GM12878 (cell line): ENCODE measurements at regions of chr3 and their contacts with region 1.

Region 1: DNA sequence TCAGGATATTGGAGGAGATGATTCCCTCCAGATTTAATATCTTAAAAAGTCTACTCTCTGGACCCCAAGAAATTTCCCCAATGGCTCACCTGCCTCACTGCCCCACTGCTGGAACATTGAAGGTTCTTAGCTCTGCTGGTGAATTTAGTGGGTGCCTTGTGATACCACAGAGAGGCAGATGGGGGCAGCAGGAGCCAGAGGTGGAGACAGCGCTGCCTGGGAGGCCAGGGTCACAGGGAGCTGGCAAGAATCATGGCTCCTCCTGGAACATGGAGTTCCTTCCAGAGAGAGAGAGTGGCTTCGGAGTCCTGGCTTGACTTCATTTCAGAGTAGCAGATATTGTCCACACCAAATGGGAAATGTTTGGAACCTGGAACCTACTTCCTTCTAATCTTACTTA is 263.5 kb upstream of the CFAP20DC start:
- DNase-seq: no peak
- ATAC-seq: peak; percentile 93
- H3K4me3 ChIP-seq: no peak overlapping the region
- H3K27ac ChIP-seq: no peak overlapping the region
- H3K4me1 ChIP-seq: no peaks in the 10 kb centered on the region
- H3K27me3 ChIP-seq: no peaks in the 10 kb centered on the region
- CTCF ChIP-seq: peak; percentile 63 to 85 (median 76)
- EP300 ChIP-seq: no peak
- POLR2A ChIP-seq: no peak
- RAD21 ChIP-seq: peak; percentile 99

Region 2: GRCh38 chr3:59127071-59127470 is 186.3 kb before region 1 on chr3:
- CTCF ChIA-PET with region 1: no interaction called
- POLR2A ChIA-PET with region 1: no interaction called
- RAD21 ChIA-PET with region 1: no interaction called
- SMC1A ChIA-PET with region 1: no interaction called
- in situ Hi-C with region 1: no loop called
- intact Hi-C with region 1: no loop called
- DNase-seq: no peak
- ATAC-seq: no peak
- H3K4me3 ChIP-seq: no peak overlapping the region
- H3K27ac ChIP-seq: no peak overlapping the region
- H3K4me1 ChIP-seq: no peaks in the 10 kb centered on the region
- H3K27me3 ChIP-seq: 0 out of 4 replicates have a peak, but pooled peaks cover 0 to 2% of the 10 kb centered on the region in 2 experiments
- CTCF ChIP-seq: no peak
- EP300 ChIP-seq: no peak
- POLR2A ChIP-seq: no peak
- RAD21 ChIP-seq: no peak

Region 3: DNA sequence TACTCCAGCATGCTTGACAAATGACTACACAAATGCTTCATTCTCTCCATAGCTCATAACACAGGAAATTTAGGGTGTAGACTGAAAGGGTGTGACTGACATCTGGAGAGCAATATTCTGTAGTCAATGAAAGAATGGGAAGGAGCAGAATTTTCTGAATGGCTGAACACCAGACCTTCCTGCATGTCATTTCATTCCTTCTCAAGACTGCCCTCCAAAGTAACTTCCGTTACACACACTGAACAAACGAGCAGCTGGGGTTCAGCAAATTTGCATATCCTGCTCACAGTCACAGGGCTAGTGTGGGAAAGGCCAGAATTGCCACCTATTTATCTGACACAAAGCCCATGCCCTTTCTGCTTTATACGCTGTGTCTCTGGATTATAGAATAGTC is 61.5 kb after region 1 on chr3:
- CTCF ChIA-PET with region 1: interaction called, 17 read pairs
- POLR2A ChIA-PET with region 1: no interaction called
- RAD21 ChIA-PET with region 1: interaction called, 8 read pairs
- SMC1A ChIA-PET with region 1: interaction called, 14 read pairs
- in situ Hi-C with region 1: no loop called
- intact Hi-C with region 1: no loop called
- DNase-seq: peak; percentile 91
- ATAC-seq: peak; percentile 99
- H3K4me3 ChIP-seq: no peak overlapping the region
- H3K27ac ChIP-seq: no peak overlapping the region
- H3K4me1 ChIP-seq: peaks cover 9% of the 10 kb centered on the region
- H3K27me3 ChIP-seq: no peaks in the 10 kb centered on the region
- CTCF ChIP-seq: no peak; a peak in 1 of 6 replicates
- EP300 ChIP-seq: 0 out of 4 replicates have a peak, but pooled peaks of 1 of the 2 experiments have one; percentile 57
- POLR2A ChIP-seq: no peak
- RAD21 ChIP-seq: peak; percentile 31; the same call in 1 of the 2 replicates

Region 4: DNA sequence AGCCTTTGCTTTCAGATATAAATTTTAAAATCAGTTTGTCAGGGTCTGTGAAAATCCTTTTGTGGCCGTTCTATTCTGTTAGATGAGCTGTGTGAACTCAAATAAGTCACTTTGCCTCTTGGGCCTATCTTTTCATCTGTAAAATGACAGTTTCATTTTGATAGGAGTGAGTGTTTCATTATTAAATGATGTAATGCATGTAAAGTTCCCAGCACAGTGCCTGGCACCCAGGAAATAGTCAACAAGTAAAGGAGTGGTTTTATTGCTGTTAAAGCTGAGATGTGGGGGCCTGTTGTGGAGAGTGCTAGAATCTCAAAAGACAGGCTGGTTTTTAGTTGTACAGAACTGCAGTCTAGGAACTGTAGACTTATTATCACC is 130.9 kb after region 1 on chr3:
- CTCF ChIA-PET with region 1: interaction called, 13 read pairs
- POLR2A ChIA-PET with region 1: interaction called, 3 read pairs
- RAD21 ChIA-PET with region 1: interaction called, 8 read pairs
- SMC1A ChIA-PET with region 1: interaction called, 27 read pairs
- in situ Hi-C with region 1: no loop called
- intact Hi-C with region 1: no loop called
- DNase-seq: no peak
- ATAC-seq: peak; percentile 86
- H3K4me3 ChIP-seq: no peak overlapping the region
- H3K27ac ChIP-seq: peak overlapping the region; percentile 72
- H3K4me1 ChIP-seq: peaks cover 10% of the 10 kb centered on the region
- H3K27me3 ChIP-seq: no peaks in the 10 kb centered on the region
- CTCF ChIP-seq: no peak
- EP300 ChIP-seq: no peak
- POLR2A ChIP-seq: no peak
- RAD21 ChIP-seq: no peak

Region 5: GRCh38 chr3:59456852-59457485 is 143.6 kb after region 1 on chr3:
- CTCF ChIA-PET with region 1: interaction called, 8 read pairs
- POLR2A ChIA-PET with region 1: no interaction called
- RAD21 ChIA-PET with region 1: interaction called, 11 read pairs
- SMC1A ChIA-PET with region 1: interaction called, 18 read pairs
- in situ Hi-C with region 1: no loop called
- intact Hi-C with region 1: loop called (anchors 5 kb)
- DNase-seq: peak; percentile 67
- ATAC-seq: peak; percentile 93
- H3K4me3 ChIP-seq: no peak overlapping the region
- H3K27ac ChIP-seq: peak overlapping the region; percentile 71
- H3K4me1 ChIP-seq: peaks cover 23% of the 10 kb centered on the region
- H3K27me3 ChIP-seq: no peaks in the 10 kb centered on the region
- CTCF ChIP-seq: no peak
- EP300 ChIP-seq: peak; percentile 70 to 88; a peak in 3 of 4 replicates
- POLR2A ChIP-seq: no peak
- RAD21 ChIP-seq: peak; percentile 33; the same call in 1 of the 2 replicates

Region 6: GRCh38 chr3:59575113-59576001 is 262.0 kb after region 1 on chr3:
- CTCF ChIA-PET with region 1: interaction called, 29 read pairs
- POLR2A ChIA-PET with region 1: no interaction called
- RAD21 ChIA-PET with region 1: interaction called, 12 read pairs
- SMC1A ChIA-PET with region 1: interaction called, 14 read pairs
- in situ Hi-C with region 1: no loop called
- intact Hi-C with region 1: loop called (anchors 2 kb)
- DNase-seq: peak; percentile 40
- ATAC-seq: peak; percentile 95
- H3K4me3 ChIP-seq: no peak overlapping the region
- H3K27ac ChIP-seq: no peak overlapping the region
- H3K4me1 ChIP-seq: no peaks in the 10 kb centered on the region
- H3K27me3 ChIP-seq: no peaks in the 10 kb centered on the region
- CTCF ChIP-seq: peak; percentile 93 to 97 (median 95)
- EP300 ChIP-seq: no peak
- POLR2A ChIP-seq: no peak
- RAD21 ChIP-seq: peak; percentile 97

Region 7: DNA sequence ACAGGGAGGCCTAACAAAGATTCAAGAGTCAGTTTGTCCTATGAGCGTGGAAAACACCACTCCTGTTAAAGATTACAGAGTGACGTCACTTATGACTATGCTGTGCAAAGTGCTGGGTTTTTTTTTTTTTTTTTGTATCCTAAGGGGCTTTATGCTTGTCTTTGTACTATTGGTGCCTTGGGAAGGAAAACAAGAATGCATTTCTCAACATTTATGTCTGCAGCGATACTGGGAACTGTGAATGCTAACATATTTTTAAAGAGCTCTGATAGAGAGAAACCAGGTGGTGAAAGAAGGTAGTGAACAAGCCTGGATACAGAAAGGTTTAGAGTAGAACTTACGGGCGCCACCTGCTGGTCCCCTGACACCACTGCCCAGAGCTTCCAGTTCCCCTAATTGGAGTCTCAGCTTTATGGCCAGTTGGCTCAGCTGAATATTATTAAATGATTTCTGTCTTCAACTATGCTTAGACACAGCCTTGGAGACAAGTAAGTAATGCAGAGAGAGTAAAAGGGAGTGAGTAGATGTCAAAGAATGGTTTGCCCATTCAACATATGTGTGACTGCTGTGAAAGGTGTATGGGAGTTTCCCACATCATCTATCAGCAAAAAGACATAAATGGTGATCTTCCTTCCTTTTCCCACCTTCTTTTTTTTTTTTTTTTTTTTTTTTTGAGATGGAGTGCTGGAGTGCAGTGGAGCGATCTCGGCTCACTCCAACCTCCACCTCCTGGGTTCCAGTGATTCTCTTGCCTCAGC is 544.4 kb after region 1 on chr3:
- CTCF ChIA-PET with region 1: interaction called, 54 read pairs
- POLR2A ChIA-PET with region 1: no interaction called
- RAD21 ChIA-PET with region 1: interaction called, 27 read pairs
- SMC1A ChIA-PET with region 1: interaction called, 13 read pairs
- in situ Hi-C with region 1: loop called (anchors 10 kb)
- intact Hi-C with region 1: loop called (anchors 2 kb)
- DNase-seq: peak; percentile 17
- ATAC-seq: peak; percentile 100
- H3K4me3 ChIP-seq: no peak overlapping the region
- H3K27ac ChIP-seq: no peak overlapping the region
- H3K4me1 ChIP-seq: no peaks in the 10 kb centered on the region
- H3K27me3 ChIP-seq: no peaks in the 10 kb centered on the region; a peak in 1 of 4 replicates
- CTCF ChIP-seq: peak; percentile 89 to 96 (median 95)
- EP300 ChIP-seq: no peak
- POLR2A ChIP-seq: no peak
- RAD21 ChIP-seq: peak; percentile 85